GM12878 (cell line): ENCODE measurements at regions of chr10 and their contacts with region 1.

Region 1: GRCh38 chr10:28381903-28382347 is 79.1 kb upstream of the MPP7 start:
- DNase-seq: peak; percentile 40
- ATAC-seq: peak; percentile 97
- H3K4me3 ChIP-seq: no peak overlapping the region
- H3K27ac ChIP-seq: no peak overlapping the region
- H3K4me1 ChIP-seq: no peaks in the 10 kb centered on the region
- H3K27me3 ChIP-seq: no peaks in the 10 kb centered on the region
- CTCF ChIP-seq: peak; percentile 87 to 95 (median 89)
- EP300 ChIP-seq: no peak
- POLR2A ChIP-seq: no peak
- RAD21 ChIP-seq: peak; percentile 98

Region 2: DNA sequence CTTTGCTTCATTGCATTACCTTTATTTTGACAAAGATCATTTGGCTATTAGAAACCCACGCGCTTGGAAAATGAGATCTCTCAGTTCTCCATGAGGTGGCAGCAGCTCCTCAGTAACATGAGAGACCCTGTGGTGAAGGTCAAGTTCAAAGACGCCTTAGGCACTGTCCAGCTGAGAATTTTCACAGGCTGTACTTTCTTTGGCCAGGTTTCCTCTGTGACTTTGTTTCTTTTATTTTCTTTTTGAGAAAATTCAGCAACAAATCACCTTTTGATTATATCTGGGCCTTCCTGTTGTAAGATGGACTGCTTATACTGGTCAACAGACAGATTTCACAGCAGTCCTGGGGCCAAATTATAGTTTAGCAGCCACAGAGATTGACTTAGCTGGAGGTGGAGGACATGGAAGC is 823.3 kb before region 1 on chr10:
- CTCF ChIA-PET with region 1: interaction called, 5 read pairs
- POLR2A ChIA-PET with region 1: no interaction called
- RAD21 ChIA-PET with region 1: interaction called, 4 read pairs
- SMC1A ChIA-PET with region 1: no interaction called
- in situ Hi-C with region 1: loop called (anchors 10 kb)
- intact Hi-C with region 1: loop called (anchors 5 kb)
- DNase-seq: no peak
- ATAC-seq: peak; percentile 87
- H3K4me3 ChIP-seq: no peak overlapping the region
- H3K27ac ChIP-seq: no peak overlapping the region
- H3K4me1 ChIP-seq: no peaks in the 10 kb centered on the region
- H3K27me3 ChIP-seq: no peaks in the 10 kb centered on the region
- CTCF ChIP-seq: peak; percentile 53 to 70 (median 57); a peak in 5 of 6 replicates
- EP300 ChIP-seq: no peak
- POLR2A ChIP-seq: no peak
- RAD21 ChIP-seq: peak; percentile 81

Region 3: DNA sequence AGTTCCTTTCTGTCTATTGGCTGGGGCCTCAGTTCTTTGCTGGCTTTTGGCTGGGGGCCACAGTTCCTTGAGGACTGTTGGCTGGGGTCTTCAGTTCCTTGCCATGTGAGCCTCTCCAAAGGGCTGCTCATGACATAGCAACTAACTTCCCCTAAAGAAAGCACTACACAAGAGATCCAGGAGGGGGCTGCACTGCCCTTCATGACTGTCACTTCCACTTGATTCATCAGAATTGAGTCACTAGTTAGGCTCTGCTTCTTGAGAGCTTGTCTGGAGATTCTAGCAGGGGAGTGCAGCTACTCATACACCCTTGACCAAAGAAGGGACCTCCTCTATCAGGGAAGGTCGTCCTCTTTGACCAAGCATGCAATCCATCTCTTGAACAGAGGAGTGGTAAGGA is 598.3 kb before region 1 on chr10:
- CTCF ChIA-PET with region 1: no interaction called
- POLR2A ChIA-PET with region 1: no interaction called
- RAD21 ChIA-PET with region 1: no interaction called
- SMC1A ChIA-PET with region 1: no interaction called
- in situ Hi-C with region 1: no loop called
- intact Hi-C with region 1: loop called (anchors 5 kb)
- DNase-seq: no peak
- ATAC-seq: peak; percentile 41; the same call in 2 of the 3 replicates
- H3K4me3 ChIP-seq: no peak overlapping the region
- H3K27ac ChIP-seq: no peak overlapping the region
- H3K4me1 ChIP-seq: no peaks in the 10 kb centered on the region
- H3K27me3 ChIP-seq: no peaks in the 10 kb centered on the region; a peak in 1 of 4 replicates
- CTCF ChIP-seq: no peak
- EP300 ChIP-seq: no peak
- POLR2A ChIP-seq: no peak
- RAD21 ChIP-seq: no peak

Region 4: GRCh38 chr10:28241741-28242399 is 140.1 kb before region 1 on chr10:
- CTCF ChIA-PET with region 1: interaction called, 28 read pairs
- POLR2A ChIA-PET with region 1: no interaction called
- RAD21 ChIA-PET with region 1: interaction called, 3 read pairs
- SMC1A ChIA-PET with region 1: interaction called, 17 read pairs
- in situ Hi-C with region 1: loop called (anchors 5 kb)
- intact Hi-C with region 1: no loop called
- DNase-seq: peak; percentile 2
- ATAC-seq: peak; percentile 70
- H3K4me3 ChIP-seq: no peak overlapping the region
- H3K27ac ChIP-seq: no peak overlapping the region
- H3K4me1 ChIP-seq: no peaks in the 10 kb centered on the region
- H3K27me3 ChIP-seq: peaks cover 0 to 3% of the 10 kb centered on the region in 2 experiments; a peak in 1 of 4 replicates
- CTCF ChIP-seq: peak; percentile 82 to 86 (median 83)
- EP300 ChIP-seq: no peak
- POLR2A ChIP-seq: no peak
- RAD21 ChIP-seq: peak; percentile 79

Region 5: GRCh38 chr10:28302638-28303488 is 79.1 kb before region 1 on chr10 and contains the start of gene MPP7:
- CTCF ChIA-PET with region 1: interaction called, 70 read pairs
- POLR2A ChIA-PET with region 1: no interaction called
- RAD21 ChIA-PET with region 1: interaction called, 45 read pairs
- SMC1A ChIA-PET with region 1: interaction called, 11 read pairs
- in situ Hi-C with region 1: no loop called
- intact Hi-C with region 1: loop called (anchors 1 kb)
- DNase-seq: peak; percentile 78
- ATAC-seq: peak; percentile 100
- H3K4me3 ChIP-seq: peak within 1 kb of the TSS; percentile 72; the same call in 1 of the 2 replicates
- H3K27ac ChIP-seq: no peak within 1 kb of the TSS
- H3K4me1 ChIP-seq: no peaks in the 10 kb centered on the region
- H3K27me3 ChIP-seq: peaks cover 0 to 5% of the 10 kb centered on the region in 2 experiments; a peak in 1 of 4 replicates
- CTCF ChIP-seq: peak in 2 of 3 experiments; percentile 22 to 38; a peak in 3 of 6 replicates
- EP300 ChIP-seq: no peak
- POLR2A ChIP-seq: no peak
- RAD21 ChIP-seq: 0 out of 2 replicates have a peak, but pooled peaks have one; percentile 20
- polyA plus RNA-seq, gene MPP7: 0.04 TPM in 1 of 2 experiments, not detected in the other

Region 6: GRCh38 chr10:28367929-28368484 is 13.9 kb before region 1 on chr10:
- CTCF ChIA-PET with region 1: interaction called, 10 read pairs
- POLR2A ChIA-PET with region 1: interaction called, 4 read pairs
- RAD21 ChIA-PET with region 1: interaction called, 4 read pairs
- SMC1A ChIA-PET with region 1: interaction called, 17 read pairs
- in situ Hi-C with region 1: no loop called
- intact Hi-C with region 1: no loop called
- DNase-seq: peak; percentile 68
- ATAC-seq: peak; percentile 99
- H3K4me3 ChIP-seq: no peak overlapping the region
- H3K27ac ChIP-seq: no peak overlapping the region
- H3K4me1 ChIP-seq: peaks cover 7% of the 10 kb centered on the region
- H3K27me3 ChIP-seq: no peaks in the 10 kb centered on the region
- CTCF ChIP-seq: no peak
- EP300 ChIP-seq: no peak
- POLR2A ChIP-seq: no peak
- RAD21 ChIP-seq: 0 out of 2 replicates have a peak, but pooled peaks have one; percentile 1